ENCODE measurements at regions of chr17 and their contacts with region 1.

Region 1: DNA sequence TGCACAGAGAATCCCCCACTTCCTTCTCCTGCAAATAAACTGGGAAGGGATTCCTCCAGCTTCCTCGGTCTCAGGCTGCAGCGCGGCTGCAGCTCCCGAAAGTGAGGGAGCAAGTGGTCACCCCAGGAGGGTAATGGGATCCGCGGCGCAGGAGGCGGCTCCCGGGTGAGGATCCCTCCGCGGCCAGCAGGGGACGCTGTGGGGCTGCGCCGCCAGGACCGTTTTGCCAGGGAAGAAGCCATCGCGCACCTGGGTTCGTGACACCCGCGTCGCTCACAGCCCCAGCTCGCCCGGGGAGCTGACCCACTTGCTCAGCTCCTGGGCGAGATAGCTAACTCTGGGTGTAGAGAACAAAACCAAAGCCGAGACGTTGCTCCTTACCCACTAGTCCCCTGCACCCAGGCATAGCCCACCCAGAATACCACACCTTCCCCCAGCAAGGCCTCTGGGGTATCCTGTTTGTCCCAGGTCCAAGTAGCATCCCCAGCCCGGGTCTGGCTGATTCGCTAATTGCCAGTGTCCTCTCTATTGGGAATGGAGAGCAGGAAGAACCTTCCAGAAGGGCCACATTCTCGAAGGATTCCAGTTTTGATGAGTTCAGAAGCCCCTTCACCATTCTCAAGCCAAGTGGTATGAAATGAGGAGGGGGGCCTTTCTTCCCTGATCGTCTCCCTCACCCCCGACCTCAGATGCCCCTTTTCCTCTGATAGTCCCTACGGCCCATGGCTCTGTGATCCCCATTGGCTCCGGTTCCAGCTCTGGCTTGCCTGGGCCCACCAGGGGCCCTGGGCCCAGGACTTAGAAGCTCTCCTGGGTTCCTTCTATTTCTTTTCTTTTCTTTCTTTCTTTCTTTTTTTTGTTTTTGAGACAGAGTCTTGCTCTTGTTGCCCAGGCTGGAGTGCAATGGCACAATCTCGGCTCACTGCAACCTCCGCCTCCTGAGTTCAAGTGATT is 14.1 kb downstream of the CYGB start:
- DNase-seq: no peak
- H3K4me3 ChIP-seq: no peak overlapping the region
- H3K27me3 ChIP-seq: no peaks in the 10 kb centered on the region
- CTCF ChIP-seq: peak; percentile 100

Region 2: GRCh38 chr17:76314392-76315227 is 208.8 kb before region 1 on chr17:
- CTCF ChIA-PET with region 1: no interaction called
- POLR2A ChIA-PET with region 1: no interaction called
- DNase-seq: no peak
- H3K4me3 ChIP-seq: no peak overlapping the region
- H3K27me3 ChIP-seq: no peaks in the 10 kb centered on the region
- CTCF ChIP-seq: no peak

Region 3: GRCh38 chr17:76540381-76541300 is 17.3 kb after region 1 on chr17:
- CTCF ChIA-PET with region 1: interaction called, 103 read pairs
- POLR2A ChIA-PET with region 1: no interaction called
- DNase-seq: peak; percentile 78
- H3K4me3 ChIP-seq: peak overlapping the region; percentile 31; the same call in 1 of the 2 replicates
- H3K27me3 ChIP-seq: peaks cover 18% of the 10 kb centered on the region
- CTCF ChIP-seq: no peak; the same call in 1 of the 2 replicates

Region 4: GRCh38 chr17:76547184-76547641 is 23.9 kb after region 1 on chr17:
- CTCF ChIA-PET with region 1: interaction called, 103 read pairs
- POLR2A ChIA-PET with region 1: no interaction called
- DNase-seq: no peak
- H3K4me3 ChIP-seq: no peak overlapping the region
- H3K27me3 ChIP-seq: 0 out of 2 replicates have a peak, but pooled peaks cover 3% of the 10 kb centered on the region
- CTCF ChIP-seq: peak; percentile 80

Region 5: GRCh38 chr17:76569607-76570279 is 46.4 kb after region 1 on chr17:
- CTCF ChIA-PET with region 1: no interaction called
- POLR2A ChIA-PET with region 1: no interaction called
- DNase-seq: no peak
- H3K4me3 ChIP-seq: no peak overlapping the region
- H3K27me3 ChIP-seq: no peaks in the 10 kb centered on the region
- CTCF ChIP-seq: no peak

Measured in BJ (cell line).